T-cell (primary cell): ENCODE measurements at regions of chr11 and their contacts with region 1.

Region 1: GRCh38 chr11:59171508-59172322 is at the start of gene DTX4:
- DNase-seq: peak; percentile 73 to 93 (median 85)
- ATAC-seq: peak; percentile 86 to 94 (median 90)
- H3K4me3 ChIP-seq: peak within 1 kb of the TSS; percentile 71 to 75
- H3K4me3 Mint-ChIP-seq: peak within 1 kb of the TSS; percentile 79 to 90 (median 88)
- H3K27ac ChIP-seq: peak within 1 kb of the TSS; percentile 40
- H3K27ac Mint-ChIP-seq: peak within 1 kb of the TSS in 1 of 2 donors; percentile 58
- H3K4me1 ChIP-seq: peaks cover 2 to 19% of the 10 kb centered on the region in 2 experiments
- H3K4me1 Mint-ChIP-seq: peaks cover 7 to 14% (median 9%) of the 10 kb centered on the region in 3 donors
- H3K27me3 ChIP-seq: peaks cover 0 to 10% of the 10 kb centered on the region in 2 experiments
- H3K27me3 Mint-ChIP-seq: peaks cover 6 to 7% of the 10 kb centered on the region in 2 donors
- total RNA-seq, gene DTX4: 0.70 to 3.7 (median 2.1) TPM

Region 2: DNA sequence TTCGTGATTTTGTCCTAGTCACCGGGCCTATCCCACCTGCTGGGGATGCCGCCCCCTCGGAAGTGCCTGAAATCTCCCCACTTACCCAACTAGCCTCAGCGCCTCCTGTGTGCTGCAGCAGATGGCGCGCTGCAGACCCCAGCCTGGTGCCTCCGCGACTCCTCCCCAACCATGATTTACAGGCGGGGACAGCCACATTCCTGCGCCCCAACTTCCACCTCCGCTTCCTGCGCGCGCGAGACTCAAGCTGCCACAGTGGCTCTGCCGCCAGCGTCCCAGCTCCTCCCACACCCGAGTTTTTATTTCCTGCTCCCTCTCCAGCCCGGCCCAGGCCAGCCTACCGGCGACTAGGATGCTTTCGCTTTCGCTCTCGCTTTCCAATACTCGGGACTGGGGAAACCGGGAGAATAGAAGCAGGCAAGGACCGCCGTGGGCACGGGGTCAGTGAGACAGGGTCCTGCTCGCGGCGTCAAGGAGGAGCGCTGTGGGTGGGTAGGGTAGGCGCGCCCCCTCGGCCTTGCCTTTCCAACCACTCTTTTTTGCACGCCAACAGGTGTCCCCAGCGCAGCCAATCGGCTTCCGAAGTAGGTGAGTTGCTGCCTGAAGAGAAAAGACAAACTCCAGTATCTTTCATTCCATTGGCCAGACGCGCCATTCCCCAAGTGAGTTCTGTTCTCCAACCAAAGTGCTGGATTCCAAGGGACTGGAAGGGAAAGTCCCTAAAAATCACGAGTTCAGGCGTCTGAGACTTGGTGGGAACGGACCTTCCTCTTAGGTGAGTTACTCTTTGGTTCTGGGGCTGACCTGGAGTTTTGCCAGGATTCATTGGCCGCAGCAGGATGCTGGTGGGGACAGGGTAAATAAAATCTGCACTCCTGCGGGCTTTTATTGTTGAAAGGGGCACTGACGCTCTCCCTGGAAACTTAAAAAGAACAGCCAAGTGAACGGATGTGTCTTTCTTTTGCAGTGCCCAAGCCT is 28.9 kb before region 1 on chr11 and contains the start of gene FAM111A:
- CTCF ChIA-PET with region 1: interaction called in 1 of 2 experiments, 29 read pairs
- POLR2A ChIA-PET with region 1: interaction called in 1 of 2 experiments, 3 read pairs
- DNase-seq: peak; percentile 69 to 93 (median 85)
- ATAC-seq: peak; percentile 83 to 89 (median 87)
- H3K4me3 ChIP-seq: peak within 1 kb of the TSS; percentile 77 to 87
- H3K4me3 Mint-ChIP-seq: peak within 1 kb of the TSS; percentile 93 to 97 (median 97)
- H3K27ac ChIP-seq: peak within 1 kb of the TSS; percentile 93
- H3K27ac Mint-ChIP-seq: peak within 1 kb of the TSS; percentile 92 to 95
- H3K4me1 ChIP-seq: peaks cover 21 to 26% of the 10 kb centered on the region in 2 experiments
- H3K4me1 Mint-ChIP-seq: peaks cover 50 to 56% (median 51%) of the 10 kb centered on the region in 3 donors
- H3K27me3 ChIP-seq: no peaks in the 10 kb centered on the region
- H3K27me3 Mint-ChIP-seq: no peaks in the 10 kb centered on the region
- total RNA-seq, gene FAM111A: 75.9 to 90.2 (median 78.9) TPM

Region 3: GRCh38 chr11:59158206-59159068 is 13.3 kb before region 1 on chr11:
- CTCF ChIA-PET with region 1: interaction called, 7 to 15 read pairs
- POLR2A ChIA-PET with region 1: no interaction called
- DNase-seq: peak; percentile 26 to 88 (median 52)
- ATAC-seq: peak; percentile 88 to 99 (median 94)
- H3K4me3 ChIP-seq: no peak overlapping the region
- H3K4me3 Mint-ChIP-seq: no peak overlapping the region
- H3K27ac ChIP-seq: no peak overlapping the region
- H3K27ac Mint-ChIP-seq: no peak overlapping the region
- H3K4me1 ChIP-seq: peaks cover 0 to 3% of the 10 kb centered on the region in 2 experiments
- H3K4me1 Mint-ChIP-seq: peaks cover 4 to 5% (median 4%) of the 10 kb centered on the region in 3 donors
- H3K27me3 ChIP-seq: peaks cover 0 to 5% of the 10 kb centered on the region in 2 experiments
- H3K27me3 Mint-ChIP-seq: peaks cover 13 to 19% of the 10 kb centered on the region in 2 donors

Region 4: DNA sequence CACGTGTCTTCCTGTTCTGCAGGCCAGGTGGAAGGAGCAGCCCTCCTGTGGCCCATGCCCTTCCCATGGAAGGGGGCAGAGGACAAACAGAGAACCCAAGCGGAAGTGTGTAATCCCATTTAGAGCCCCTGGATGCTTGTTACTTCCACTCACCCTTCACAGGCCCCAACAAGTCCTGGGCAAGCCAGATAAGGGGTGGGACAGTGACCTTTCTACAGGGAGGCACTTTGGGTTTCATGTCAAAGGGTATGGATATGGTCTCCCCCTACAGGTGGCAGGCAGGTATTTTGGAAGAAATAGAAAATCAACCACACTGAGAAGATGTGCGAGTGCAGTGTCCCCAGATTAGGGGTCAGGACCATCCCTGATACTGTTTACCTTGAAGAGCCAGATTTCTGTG is 29.6 kb after region 1 on chr11:
- CTCF ChIA-PET with region 1: interaction called in 1 of 2 experiments, 12 read pairs
- POLR2A ChIA-PET with region 1: no interaction called
- DNase-seq: no peak
- ATAC-seq: no peak
- H3K4me3 ChIP-seq: no peak overlapping the region
- H3K4me3 Mint-ChIP-seq: no peak overlapping the region
- H3K27ac ChIP-seq: no peak overlapping the region
- H3K27ac Mint-ChIP-seq: no peak overlapping the region
- H3K4me1 ChIP-seq: peaks cover 0 to 6% of the 10 kb centered on the region in 2 experiments
- H3K4me1 Mint-ChIP-seq: peaks cover 0 to 15% (median 7%) of the 10 kb centered on the region in 3 donors
- H3K27me3 ChIP-seq: peaks cover 0 to 4% of the 10 kb centered on the region in 2 experiments
- H3K27me3 Mint-ChIP-seq: no peaks in the 10 kb centered on the region

Region 5: DNA sequence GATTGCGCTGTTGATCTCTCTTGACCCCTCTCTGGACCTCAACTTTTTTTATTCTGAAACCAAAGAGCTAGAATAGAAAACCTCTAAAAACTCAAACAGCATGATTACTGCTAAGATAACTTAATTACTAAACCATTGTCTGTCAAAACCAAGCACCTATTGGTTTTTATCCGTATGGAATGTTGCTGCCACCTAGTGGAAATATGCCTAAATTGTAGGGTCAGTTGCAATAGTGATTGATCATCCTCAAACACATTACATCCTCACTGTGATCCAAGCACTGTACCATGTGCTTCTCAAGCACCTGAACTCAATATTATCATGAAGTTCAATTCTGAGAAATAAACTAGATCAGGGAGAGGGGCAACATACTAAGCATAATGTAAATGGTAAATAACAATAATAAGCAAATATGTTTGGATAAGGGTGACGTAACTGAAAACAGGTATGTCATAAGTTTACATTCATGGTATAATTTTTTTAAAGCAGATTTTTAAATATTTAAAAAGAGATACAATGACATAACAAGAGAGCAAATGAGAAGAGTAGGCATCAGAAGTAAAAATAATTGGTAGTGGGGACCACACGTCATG is 258.3 kb after region 1 on chr11:
- CTCF ChIA-PET with region 1: interaction called, 10 to 19 read pairs
- POLR2A ChIA-PET with region 1: no interaction called
- DNase-seq: peak in 20 of 35 experiments; percentile 0 to 75 (median 18)
- ATAC-seq: peak in 3 of 4 experiments; percentile 63 to 75 (median 69)
- H3K4me3 ChIP-seq: no peak overlapping the region
- H3K4me3 Mint-ChIP-seq: no peak overlapping the region
- H3K27ac ChIP-seq: no peak overlapping the region
- H3K27ac Mint-ChIP-seq: no peak overlapping the region
- H3K4me1 ChIP-seq: no peaks in the 10 kb centered on the region
- H3K4me1 Mint-ChIP-seq: no peaks in the 10 kb centered on the region
- H3K27me3 ChIP-seq: no peaks in the 10 kb centered on the region
- H3K27me3 Mint-ChIP-seq: peaks cover 8 to 13% of the 10 kb centered on the region in 2 donors